HEK293 (cell line): ENCODE measurements at regions of chr2 and their contacts with region 1.

Region 1: GRCh38 chr2:118003396-118003824 is 10.5 kb downstream of the CCDC93 start:
- H3K4me3 ChIP-seq: no peak overlapping the region
- H3K27ac ChIP-seq: no peak overlapping the region
- H3K4me1 ChIP-seq: no peaks in the 10 kb centered on the region
- CTCF ChIP-seq: peak; percentile 78

Region 2: GRCh38 chr2:117814417-117815264 is 188.8 kb before region 1 on chr2 and contains the start of gene DDX18:
- CTCF ChIA-PET with region 1: interaction called, 55 read pairs
- POLR2A ChIA-PET with region 1: interaction called, 3 read pairs
- H3K4me3 ChIP-seq: peak within 1 kb of the TSS; percentile 73
- H3K27ac ChIP-seq: peak within 1 kb of the TSS; percentile 20; the same call in 1 of the 2 replicates
- H3K4me1 ChIP-seq: peaks cover 4% of the 10 kb centered on the region; the same call in 1 of the 2 replicates
- CTCF ChIP-seq: peak; percentile 99

Region 3: GRCh38 chr2:117846737-117847136 is 156.7 kb before region 1 on chr2:
- CTCF ChIA-PET with region 1: interaction called, 12 read pairs
- POLR2A ChIA-PET with region 1: no interaction called
- H3K4me3 ChIP-seq: no peak overlapping the region
- H3K27ac ChIP-seq: no peak overlapping the region
- H3K4me1 ChIP-seq: peaks cover 4% of the 10 kb centered on the region; the same call in 1 of the 2 replicates
- CTCF ChIP-seq: no peak

Region 4: DNA sequence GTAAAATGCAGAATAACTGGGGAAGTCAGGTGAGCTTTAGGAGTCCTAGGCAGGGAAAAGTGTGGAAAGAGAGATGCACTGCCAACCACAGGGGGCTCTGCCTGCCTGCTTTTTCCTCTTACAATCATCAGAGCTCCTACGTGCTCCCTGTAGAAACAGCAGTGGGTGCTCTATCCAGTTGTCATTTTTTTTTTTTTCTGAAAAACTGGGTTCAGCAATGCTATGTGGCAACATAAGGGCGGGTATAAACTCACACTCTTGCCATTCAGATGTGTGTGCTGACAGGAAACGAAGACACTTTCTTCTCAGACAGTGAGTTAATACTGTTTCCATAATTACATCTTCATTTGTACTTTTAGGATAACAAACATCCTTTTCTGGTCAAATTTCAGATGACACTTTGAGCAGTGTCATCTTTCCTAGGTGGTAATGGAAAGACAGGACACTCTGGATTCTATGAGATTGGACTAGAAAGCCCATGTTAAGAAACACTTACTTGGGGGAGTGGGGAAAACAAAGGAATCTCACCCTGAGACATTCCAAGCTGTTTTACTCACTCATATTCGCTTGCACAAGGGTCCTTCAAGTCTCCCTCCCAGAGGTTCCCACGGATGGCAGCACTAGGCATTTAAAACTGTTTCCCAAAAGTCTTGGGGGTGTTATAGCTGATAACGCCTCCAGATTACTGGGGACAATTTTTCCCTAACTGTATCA is 30.8 kb before region 1 on chr2:
- CTCF ChIA-PET with region 1: interaction called, 29 read pairs
- POLR2A ChIA-PET with region 1: no interaction called
- H3K4me3 ChIP-seq: no peak overlapping the region
- H3K27ac ChIP-seq: no peak overlapping the region
- H3K4me1 ChIP-seq: no peaks in the 10 kb centered on the region
- CTCF ChIP-seq: no peak

Region 5: DNA sequence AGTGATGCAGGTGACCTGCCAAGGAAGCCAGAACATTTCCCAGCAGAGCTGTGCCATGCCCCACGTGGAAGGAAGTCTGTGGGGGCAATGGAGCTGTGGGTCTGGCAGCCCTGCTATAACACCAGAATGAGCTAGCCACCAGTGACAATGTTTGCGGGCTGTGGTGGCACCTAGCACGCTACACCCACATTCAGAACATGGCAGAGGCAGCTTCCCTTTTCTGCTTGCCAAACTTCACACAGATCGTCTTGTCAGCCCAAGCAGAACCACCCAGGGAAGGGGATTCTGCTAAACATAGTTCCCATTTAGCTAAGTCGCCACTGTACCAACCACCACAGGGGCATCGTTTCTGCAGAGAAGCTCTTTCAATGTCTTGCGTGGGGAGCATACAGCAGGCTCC is 37.5 kb after region 1 on chr2:
- CTCF ChIA-PET with region 1: no interaction called
- POLR2A ChIA-PET with region 1: no interaction called
- H3K4me3 ChIP-seq: no peak overlapping the region
- H3K27ac ChIP-seq: no peak overlapping the region
- H3K4me1 ChIP-seq: no peaks in the 10 kb centered on the region
- CTCF ChIP-seq: no peak

Region 6: GRCh38 chr2:118061135-118061955 is 57.9 kb after region 1 on chr2:
- CTCF ChIA-PET with region 1: interaction called, 17 read pairs
- POLR2A ChIA-PET with region 1: no interaction called
- H3K4me3 ChIP-seq: no peak overlapping the region
- H3K27ac ChIP-seq: no peak overlapping the region
- H3K4me1 ChIP-seq: peaks cover 13% of the 10 kb centered on the region; the same call in 1 of the 2 replicates
- CTCF ChIP-seq: peak; percentile 68

Region 7: GRCh38 chr2:118077636-118078247 is 74.3 kb after region 1 on chr2:
- CTCF ChIA-PET with region 1: no interaction called
- POLR2A ChIA-PET with region 1: no interaction called
- H3K4me3 ChIP-seq: no peak overlapping the region
- H3K27ac ChIP-seq: no peak overlapping the region
- H3K4me1 ChIP-seq: 0 out of 2 replicates have a peak, but pooled peaks cover 4% of the 10 kb centered on the region
- CTCF ChIP-seq: no peak

Region 8: GRCh38 chr2:118177884-118178283 is 174.5 kb after region 1 on chr2:
- CTCF ChIA-PET with region 1: no interaction called
- POLR2A ChIA-PET with region 1: no interaction called
- H3K4me3 ChIP-seq: no peak overlapping the region
- H3K27ac ChIP-seq: no peak overlapping the region
- H3K4me1 ChIP-seq: no peaks in the 10 kb centered on the region
- CTCF ChIP-seq: no peak

Region 9: DNA sequence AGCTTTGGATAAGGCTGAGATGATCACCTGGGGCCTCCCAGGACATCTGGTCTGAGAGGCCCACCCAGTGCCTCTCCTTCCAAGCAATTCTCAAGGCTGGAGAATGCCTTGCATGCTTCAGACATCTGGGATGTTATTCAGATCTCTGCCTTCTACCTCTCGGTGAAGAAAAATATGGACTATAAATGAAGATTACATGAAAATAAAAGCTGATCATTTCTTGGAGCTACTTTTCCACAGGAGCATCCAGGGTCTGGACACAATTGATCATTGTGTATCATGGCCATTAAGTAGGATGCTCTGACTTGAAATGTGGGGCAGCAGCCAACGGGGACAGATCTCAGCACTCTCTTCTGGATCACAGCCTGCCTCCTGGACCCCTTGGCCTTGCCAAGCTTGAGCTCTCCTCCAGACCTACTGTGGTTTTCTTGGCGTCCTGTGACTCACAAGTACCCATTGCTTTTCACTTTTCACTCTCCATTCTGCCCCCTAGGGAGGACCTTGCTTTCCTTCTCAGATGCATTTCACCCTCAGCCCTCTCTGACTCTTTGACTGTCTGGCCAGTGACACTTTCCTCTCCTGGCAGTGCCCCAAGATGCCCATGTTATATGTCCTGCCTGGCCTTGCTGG is 288.0 kb after region 1 on chr2:
- CTCF ChIA-PET with region 1: no interaction called
- POLR2A ChIA-PET with region 1: no interaction called
- H3K4me3 ChIP-seq: no peak overlapping the region
- H3K27ac ChIP-seq: no peak overlapping the region
- H3K4me1 ChIP-seq: 0 out of 2 replicates have a peak, but pooled peaks cover 2% of the 10 kb centered on the region
- CTCF ChIP-seq: no peak